Posterior vena cava (tissue), 2 donors: ENCODE measurements at regions of chr2 and their contacts with region 1.

Region 1: DNA sequence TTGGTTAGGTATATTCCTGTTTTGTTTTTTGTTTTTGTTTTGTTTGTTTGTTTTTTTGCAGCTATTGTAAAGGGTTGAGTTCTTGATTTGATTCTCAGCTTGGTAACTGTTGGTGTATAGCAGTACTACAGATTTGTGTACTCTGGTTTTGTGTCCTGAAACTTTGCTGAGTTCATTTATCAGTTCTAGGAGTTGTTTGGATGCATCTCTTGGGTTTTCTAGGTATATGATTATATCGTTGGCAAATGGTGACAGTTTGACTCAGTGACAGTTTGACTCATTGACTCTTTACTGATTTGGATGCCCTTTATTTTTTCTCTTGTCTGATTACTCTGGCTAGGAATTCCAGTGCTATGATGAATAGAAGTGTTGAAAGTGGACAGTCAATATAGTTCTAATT is 53.7 kb downstream of the APLF start:
- DNase-seq: no peak

Region 2: GRCh38 chr2:68465081-68465916 is 55.7 kb before region 1 on chr2:
- intact Hi-C with region 1: loop called in 1 of 2 experiments (anchors 2 kb)
- DNase-seq: no peak